Activated naive CD4-positive, alpha-beta T cell treated with anti-CD3 and anti-CD28 coated beads, Interleukin-2, amount 10 ng/mL, durations not matched to agents 7 days and 5 days (primary cell): ENCODE measurements at regions of chr10 and their contacts with region 1.

Region 1: DNA sequence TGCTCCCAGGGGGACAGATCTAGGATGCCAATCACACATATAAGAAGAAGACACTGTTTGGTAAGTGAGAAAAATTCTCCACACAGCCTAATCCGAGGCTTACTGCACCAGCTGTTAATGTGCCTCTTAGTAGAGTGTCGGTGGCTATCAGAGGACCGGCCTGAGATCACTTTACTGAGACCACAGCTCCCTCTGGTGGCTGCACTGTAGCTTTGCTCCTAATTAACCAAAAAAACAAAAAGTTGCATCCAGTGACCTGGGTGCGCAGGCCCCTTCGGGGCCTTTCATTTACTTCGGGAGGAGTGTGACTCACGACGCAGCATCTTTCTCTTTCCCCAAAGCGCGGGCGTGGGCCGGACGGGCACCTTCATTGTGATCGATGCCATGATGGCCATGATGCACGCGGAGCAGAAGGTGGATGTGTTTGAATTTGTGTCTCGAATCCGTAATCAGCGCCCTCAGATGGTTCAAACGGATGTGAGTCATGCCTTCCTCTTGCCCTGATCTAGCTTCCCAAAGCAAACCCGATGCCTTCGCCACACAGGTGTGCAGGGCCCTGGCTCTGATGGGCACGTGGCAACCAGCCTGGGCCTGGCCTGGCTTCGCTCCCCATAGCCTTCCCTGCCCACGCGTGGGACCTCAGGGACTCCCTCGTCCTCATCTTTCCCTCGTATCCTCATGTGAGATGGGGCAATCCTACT is 56.7 kb downstream of the MKI67 start:
- DNase-seq: peak; percentile 87
- H3K4me3 Mint-ChIP-seq: no peak overlapping the region
- H3K27ac Mint-ChIP-seq: peak overlapping the region; percentile 45
- H3K4me1 Mint-ChIP-seq: peaks cover 46% of the 10 kb centered on the region
- H3K27me3 Mint-ChIP-seq: no peaks in the 10 kb centered on the region

Region 2: DNA sequence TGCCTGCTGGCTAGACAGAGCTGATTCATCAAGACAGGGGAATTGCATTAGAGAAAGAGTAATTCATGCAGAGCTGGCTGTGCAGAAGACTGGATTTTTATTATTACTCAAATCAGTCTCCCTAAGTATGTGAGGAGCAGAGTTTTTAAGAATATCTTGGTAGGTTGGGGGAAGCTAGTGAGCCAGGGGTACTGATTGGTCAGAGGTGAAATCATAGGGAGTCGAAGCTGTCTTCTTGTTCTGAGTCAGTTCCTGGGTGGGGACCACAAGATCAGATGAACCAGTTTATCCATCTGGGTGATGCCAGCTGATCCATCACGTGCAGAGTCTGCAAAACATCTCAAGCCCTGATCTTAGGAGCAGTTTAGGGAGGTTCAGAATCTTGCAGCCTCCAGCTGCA is 292.7 kb before region 1 on chr10:
- CTCF ChIA-PET with region 1: no interaction called
- DNase-seq: no peak
- H3K4me3 Mint-ChIP-seq: no peak overlapping the region
- H3K27ac Mint-ChIP-seq: no peak overlapping the region
- H3K4me1 Mint-ChIP-seq: no peaks in the 10 kb centered on the region
- H3K27me3 Mint-ChIP-seq: no peaks in the 10 kb centered on the region

Region 3: DNA sequence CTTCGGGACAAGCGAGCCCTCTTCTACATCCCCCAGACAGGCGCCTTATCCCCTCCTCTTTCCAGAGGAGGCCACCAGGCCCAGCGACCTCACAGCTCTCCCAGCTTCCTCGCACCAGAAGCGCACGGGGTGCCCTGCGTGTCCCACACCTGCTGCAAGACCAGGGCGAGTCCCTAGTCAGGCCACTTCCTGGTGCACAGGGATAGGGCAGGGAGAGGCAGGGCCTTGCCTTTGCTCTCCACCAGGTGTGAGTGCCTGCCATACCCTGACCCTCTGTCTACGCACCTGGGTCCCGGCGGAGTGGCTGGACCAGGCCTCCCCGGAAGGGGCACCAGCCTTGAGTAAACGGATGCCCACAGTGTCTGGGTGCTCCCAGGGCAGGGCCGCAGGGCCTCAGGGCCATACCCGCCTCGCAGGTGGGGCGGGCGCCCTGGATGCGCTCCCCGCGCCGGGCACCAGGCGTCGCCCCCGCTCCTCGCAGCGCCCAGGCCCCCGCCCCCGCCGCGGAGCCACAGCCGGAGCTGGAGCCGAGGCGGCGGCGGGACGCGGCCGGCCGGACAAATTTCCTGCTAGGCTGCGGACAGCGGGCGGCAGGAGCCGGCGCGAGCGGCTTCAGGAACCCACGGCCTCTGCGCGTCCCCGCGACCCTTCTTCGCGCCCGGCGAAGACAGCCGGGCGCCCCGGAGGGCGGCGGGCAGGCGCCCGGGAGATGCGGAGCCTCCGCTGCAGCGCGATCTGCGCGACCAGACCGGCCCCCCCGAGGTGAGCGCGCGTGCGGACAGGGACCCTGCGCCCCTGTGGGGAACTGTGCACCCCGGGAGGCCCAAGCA is 162.7 kb before region 1 on chr10 and contains the start of gene PTPRE:
- CTCF ChIA-PET with region 1: interaction called, 30 read pairs
- DNase-seq: peak; percentile 68
- H3K4me3 Mint-ChIP-seq: no peak within 1 kb of the TSS
- H3K27ac Mint-ChIP-seq: no peak within 1 kb of the TSS
- H3K4me1 Mint-ChIP-seq: no peaks in the 10 kb centered on the region
- H3K27me3 Mint-ChIP-seq: peaks cover 64% of the 10 kb centered on the region

Region 4: DNA sequence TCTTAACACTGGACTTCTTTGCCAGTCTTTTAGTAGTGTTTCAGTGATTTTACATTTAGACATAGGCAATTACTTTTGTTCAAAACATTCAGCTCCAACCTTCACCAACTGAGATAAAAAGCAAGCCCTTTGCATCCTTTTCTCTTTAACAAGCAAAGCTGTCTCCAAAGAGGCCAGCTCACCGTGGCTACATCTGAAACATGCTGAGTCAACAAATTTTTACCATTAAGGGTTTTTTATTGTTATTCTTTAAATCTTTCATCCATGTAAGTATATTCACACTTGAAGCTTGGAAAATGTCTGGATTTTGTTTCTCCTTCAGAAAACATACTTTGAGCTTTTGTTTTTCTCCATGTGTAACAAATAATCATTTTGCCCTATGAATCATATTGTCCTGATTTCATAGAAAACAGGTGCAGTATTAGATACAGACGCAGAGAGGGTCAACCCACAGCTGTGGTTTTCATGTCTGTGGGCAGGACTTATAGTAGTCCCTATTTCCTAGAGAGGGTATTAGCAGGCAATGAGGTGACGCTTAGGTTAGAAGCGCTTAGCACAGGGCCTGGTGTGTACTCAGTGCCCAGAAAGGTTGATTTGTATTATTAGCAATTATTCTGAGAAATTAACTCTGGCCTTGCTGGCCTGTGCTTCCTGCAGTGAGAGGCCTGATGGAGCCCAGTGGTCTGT is 42.7 kb before region 1 on chr10:
- CTCF ChIA-PET with region 1: interaction called, 288 read pairs
- DNase-seq: no peak
- H3K4me3 Mint-ChIP-seq: no peak overlapping the region
- H3K27ac Mint-ChIP-seq: no peak overlapping the region
- H3K4me1 Mint-ChIP-seq: peaks cover 11% of the 10 kb centered on the region
- H3K27me3 Mint-ChIP-seq: peaks cover 37% of the 10 kb centered on the region

Region 5: GRCh38 chr10:128040681-128041080 is 28.8 kb before region 1 on chr10:
- CTCF ChIA-PET with region 1: interaction called, 288 read pairs
- DNase-seq: no peak
- H3K4me3 Mint-ChIP-seq: no peak overlapping the region
- H3K27ac Mint-ChIP-seq: no peak overlapping the region
- H3K4me1 Mint-ChIP-seq: peaks cover 4% of the 10 kb centered on the region
- H3K27me3 Mint-ChIP-seq: peaks cover 26% of the 10 kb centered on the region

Region 6: DNA sequence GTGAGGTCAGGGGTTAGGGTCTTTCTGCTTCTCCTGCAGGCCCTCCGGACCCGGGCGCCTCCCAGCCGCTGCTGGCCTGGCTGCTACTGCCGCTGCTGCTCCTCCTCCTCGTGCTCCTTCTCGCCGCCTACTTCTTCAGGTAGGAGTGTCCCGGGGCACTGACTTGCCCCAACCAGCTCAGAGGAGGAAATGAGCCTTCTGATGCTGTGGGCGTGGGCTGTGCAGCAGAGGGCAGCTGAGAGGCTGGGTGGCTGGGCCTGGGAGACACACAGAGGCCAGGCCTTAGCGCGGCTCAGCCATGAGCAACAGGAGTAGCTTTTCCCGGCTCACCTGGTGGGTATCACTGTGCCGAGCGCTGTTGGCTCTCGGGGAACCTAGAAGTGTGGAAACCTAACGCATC is 22.1 kb before region 1 on chr10:
- CTCF ChIA-PET with region 1: interaction called, 37 read pairs
- DNase-seq: peak; percentile 93
- H3K4me3 Mint-ChIP-seq: peak overlapping the region; percentile 81
- H3K27ac Mint-ChIP-seq: peak overlapping the region; percentile 97
- H3K4me1 Mint-ChIP-seq: peaks cover 66% of the 10 kb centered on the region
- H3K27me3 Mint-ChIP-seq: peaks cover 1% of the 10 kb centered on the region

Region 7: GRCh38 chr10:128254476-128254875 is 185.0 kb after region 1 on chr10:
- CTCF ChIA-PET with region 1: no interaction called
- DNase-seq: no peak
- H3K4me3 Mint-ChIP-seq: no peak overlapping the region
- H3K27ac Mint-ChIP-seq: no peak overlapping the region
- H3K4me1 Mint-ChIP-seq: no peaks in the 10 kb centered on the region
- H3K27me3 Mint-ChIP-seq: peaks cover 17% of the 10 kb centered on the region